ENCODE measurements at regions of chr16 and their contacts with region 1.

Region 1: DNA sequence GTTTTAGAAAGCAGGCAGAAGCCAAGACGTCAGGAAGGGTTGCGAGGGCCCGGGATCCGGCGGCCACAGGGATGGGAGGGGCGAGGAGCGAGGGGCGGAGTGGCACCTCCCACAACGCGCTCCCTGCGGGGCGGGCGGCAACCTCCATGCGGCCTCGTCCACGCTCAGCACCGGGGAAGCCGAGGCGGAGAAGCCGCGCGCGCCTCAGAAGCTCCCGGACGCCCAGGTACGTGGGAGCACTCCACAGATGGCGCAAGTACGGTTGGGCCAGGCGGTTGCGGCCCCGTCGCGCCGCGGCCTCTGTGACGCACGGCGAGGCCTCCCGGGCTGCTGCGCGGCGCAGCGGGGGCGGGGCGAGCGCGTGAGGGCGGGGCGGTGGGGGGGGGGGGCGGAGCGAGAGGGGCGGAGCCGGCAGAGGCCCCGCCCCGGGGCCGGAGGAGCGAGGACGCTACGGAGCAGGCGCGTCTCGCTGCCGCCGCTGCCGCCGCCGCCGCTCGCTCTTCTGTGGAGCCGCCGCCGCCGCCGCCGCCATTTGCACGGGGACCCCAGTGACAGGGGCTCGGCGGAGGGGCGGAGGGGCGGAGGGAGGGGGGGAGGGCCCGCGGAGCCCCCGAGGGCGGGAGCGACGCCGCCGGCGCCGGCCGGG is at the start of gene TENT4B:
- DNase-seq: peak; percentile 83
- H3K4me3 ChIP-seq: peak within 1 kb of the TSS; percentile 95
- H3K27ac ChIP-seq: peak within 1 kb of the TSS; percentile 73
- H3K4me1 ChIP-seq: peaks cover 27% of the 10 kb centered on the region
- CTCF ChIP-seq: no peak
- total RNA-seq, gene TENT4B: 5.6 and 5.8 TPM in 2 replicates

Region 2: GRCh38 chr16:50024684-50025536 is 128.0 kb before region 1 on chr16 and contains the start of gene CNEP1R1:
- CTCF ChIA-PET with region 1: no interaction called
- POLR2A ChIA-PET with region 1: no interaction called
- intact Hi-C with region 1: loop called (anchors 2 kb)
- DNase-seq: peak; percentile 96
- H3K4me3 ChIP-seq: peak within 1 kb of the TSS; percentile 98
- H3K27ac ChIP-seq: peak within 1 kb of the TSS; percentile 38
- H3K4me1 ChIP-seq: peaks cover 14% of the 10 kb centered on the region
- CTCF ChIP-seq: peak; percentile 99
- total RNA-seq, gene CNEP1R1: 19.9 and 23.1 TPM in 2 replicates

Region 3: DNA sequence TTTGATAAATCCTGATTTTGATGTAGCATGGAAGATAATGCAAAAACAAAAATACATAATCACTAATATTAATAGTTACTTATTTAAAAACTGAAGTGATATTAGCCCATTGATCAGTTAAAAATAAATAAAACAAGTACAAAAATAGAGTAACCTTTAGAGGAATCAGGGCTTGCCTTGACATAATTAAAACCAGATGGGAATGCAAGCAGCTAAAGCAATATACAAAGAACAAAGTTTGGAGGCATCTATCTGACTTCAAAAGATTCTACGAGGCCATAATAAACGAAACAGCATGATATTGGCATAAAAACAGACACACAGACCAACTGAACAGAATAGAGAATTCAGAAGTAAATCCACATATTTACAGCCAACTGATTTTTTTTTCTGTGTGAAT is 102.1 kb before region 1 on chr16:
- CTCF ChIA-PET with region 1: no interaction called
- POLR2A ChIA-PET with region 1: no interaction called
- intact Hi-C with region 1: no loop called
- DNase-seq: no peak
- H3K4me3 ChIP-seq: no peak overlapping the region
- H3K27ac ChIP-seq: no peak overlapping the region
- H3K4me1 ChIP-seq: no peaks in the 10 kb centered on the region
- CTCF ChIP-seq: no peak

Region 4: DNA sequence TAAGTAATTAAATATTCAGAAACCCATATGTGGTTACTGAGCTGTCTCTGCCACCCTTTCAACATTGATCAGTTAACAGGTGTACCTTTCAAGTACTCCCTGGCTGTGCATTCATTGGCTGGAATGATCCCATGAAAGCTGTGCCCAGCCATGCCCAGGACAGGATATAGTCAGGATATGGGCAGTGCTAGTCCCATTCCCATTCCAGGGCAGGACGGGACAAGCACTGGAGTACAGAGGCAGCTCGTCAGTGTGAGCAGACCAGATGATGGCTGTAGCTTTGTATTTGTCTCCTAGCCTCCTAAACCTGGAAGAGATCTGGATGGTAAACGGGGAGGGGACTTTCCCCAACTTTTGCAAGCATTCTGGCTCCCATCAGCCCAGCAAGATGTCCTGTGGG is 64.6 kb before region 1 on chr16:
- CTCF ChIA-PET with region 1: no interaction called
- POLR2A ChIA-PET with region 1: no interaction called
- intact Hi-C with region 1: no loop called
- DNase-seq: no peak
- H3K4me3 ChIP-seq: no peak overlapping the region
- H3K27ac ChIP-seq: no peak overlapping the region
- H3K4me1 ChIP-seq: no peaks in the 10 kb centered on the region
- CTCF ChIP-seq: no peak

Region 5: GRCh38 chr16:50121721-50122445 is 31.0 kb before region 1 on chr16:
- CTCF ChIA-PET with region 1: no interaction called
- POLR2A ChIA-PET with region 1: no interaction called
- intact Hi-C with region 1: no loop called
- DNase-seq: no peak
- H3K4me3 ChIP-seq: no peak overlapping the region
- H3K27ac ChIP-seq: no peak overlapping the region
- H3K4me1 ChIP-seq: no peaks in the 10 kb centered on the region
- CTCF ChIP-seq: no peak